Caco-2 (cell line): ENCODE measurements at regions of chr17 and their contacts with region 1.

Region 1: GRCh38 chr17:49556223-49556971 is 19.3 kb upstream of the NXPH3 start:
- DNase-seq: peak; percentile 92 to 98
- H3K4me3 ChIP-seq: peak overlapping the region; percentile 8; the same call in 1 of the 2 replicates
- H3K4me3 Mint-ChIP-seq: peak overlapping the region; percentile 27
- H3K27ac Mint-ChIP-seq: no peak overlapping the region
- H3K4me1 ChIP-seq: peaks cover 3% of the 10 kb centered on the region; the same call in 1 of the 2 replicates
- H3K4me1 Mint-ChIP-seq: peaks cover 12% of the 10 kb centered on the region
- H3K27me3 ChIP-seq: no peaks in the 10 kb centered on the region
- H3K27me3 Mint-ChIP-seq: peaks cover 6% of the 10 kb centered on the region
- CTCF ChIP-seq: peak; percentile 100

Region 2: DNA sequence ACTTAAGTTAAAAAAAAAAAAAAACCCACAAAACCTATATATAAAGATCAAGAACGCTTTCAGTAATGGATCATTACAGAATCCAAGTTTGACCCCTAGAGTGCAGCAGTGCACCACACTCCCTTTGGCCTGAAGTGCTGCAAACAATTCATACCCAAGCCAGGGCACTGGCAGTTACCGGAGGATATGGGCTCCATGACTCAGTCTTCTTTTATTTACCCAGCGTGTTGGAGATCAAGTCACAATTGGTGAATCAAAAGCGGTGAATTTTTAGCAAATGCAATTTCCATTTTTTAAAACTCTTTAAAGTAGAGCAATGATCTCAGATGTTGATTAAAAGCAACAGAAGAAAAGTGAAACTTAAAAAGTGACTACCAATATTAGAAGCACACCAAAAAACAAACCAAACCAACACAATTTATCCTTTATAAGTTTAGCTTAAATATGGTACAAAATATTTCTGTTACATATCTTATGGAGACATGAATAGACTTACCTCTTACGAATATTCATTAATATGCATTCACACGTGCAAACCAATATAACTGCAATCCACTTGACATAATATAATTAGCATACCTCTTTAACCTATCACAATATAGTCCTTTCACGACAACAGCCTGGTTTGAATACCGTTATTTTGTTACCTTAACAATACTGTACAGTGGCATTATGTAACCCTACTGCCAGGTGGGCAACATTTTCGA is 240.7 kb before region 1 on chr17:
- CTCF ChIA-PET with region 1: interaction called, 5 read pairs
- POLR2A ChIA-PET with region 1: no interaction called
- intact Hi-C with region 1: loop called (anchors 1 kb)
- DNase-seq: peak; percentile 82 to 87
- H3K4me3 ChIP-seq: no peak overlapping the region
- H3K4me3 Mint-ChIP-seq: no peak overlapping the region
- H3K27ac Mint-ChIP-seq: no peak overlapping the region
- H3K4me1 ChIP-seq: no peaks in the 10 kb centered on the region; the same call in 1 of the 2 replicates
- H3K4me1 Mint-ChIP-seq: no peaks in the 10 kb centered on the region
- H3K27me3 ChIP-seq: no peaks in the 10 kb centered on the region
- H3K27me3 Mint-ChIP-seq: no peaks in the 10 kb centered on the region
- CTCF ChIP-seq: peak; percentile 97 to 99

Region 3: DNA sequence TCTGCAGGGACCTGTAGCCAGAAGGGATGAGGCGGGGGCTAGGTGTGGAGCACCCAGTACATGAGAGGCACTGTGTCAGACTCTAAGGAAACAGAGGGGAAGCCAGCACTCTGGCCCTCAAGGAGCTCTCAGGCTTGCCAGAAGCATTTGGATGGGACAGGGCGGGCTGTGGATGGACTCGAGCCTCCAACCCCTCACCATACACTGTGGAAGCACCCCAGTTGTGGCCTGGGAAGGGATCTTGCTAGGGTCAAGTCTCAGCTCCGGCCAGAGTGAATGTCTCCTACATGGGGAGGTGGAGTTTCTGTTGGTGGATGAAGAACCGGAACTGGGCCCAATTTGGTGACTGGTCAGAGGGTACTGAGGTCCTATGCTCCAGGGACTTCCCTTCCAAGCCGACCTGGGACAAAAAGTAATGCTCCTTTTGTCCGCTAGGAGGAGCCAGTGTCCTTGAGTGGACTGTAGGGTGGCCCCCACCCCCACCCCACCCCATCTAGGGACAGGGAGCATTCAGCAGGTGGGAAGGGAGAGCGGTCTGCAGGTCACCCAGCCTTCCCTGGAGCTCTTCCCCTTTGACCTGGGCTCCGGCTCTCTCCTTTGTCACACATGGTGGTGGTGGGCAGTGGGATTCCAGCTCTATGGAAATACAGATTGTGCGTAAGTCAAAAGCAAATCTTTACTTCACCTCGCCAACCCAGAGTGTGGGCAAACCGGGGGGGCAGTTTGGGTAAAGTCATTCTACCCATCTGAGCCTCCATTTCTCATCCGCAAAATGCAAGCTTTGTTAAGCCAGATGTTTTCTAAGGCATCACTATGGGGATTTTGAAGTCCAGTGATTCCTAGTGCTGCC is 121.4 kb before region 1 on chr17:
- CTCF ChIA-PET with region 1: interaction called, 35 read pairs
- POLR2A ChIA-PET with region 1: interaction called, 3 read pairs
- intact Hi-C with region 1: loop called (anchors 1 kb)
- DNase-seq: peak; percentile 85 to 88
- H3K4me3 ChIP-seq: no peak overlapping the region
- H3K4me3 Mint-ChIP-seq: no peak overlapping the region
- H3K27ac Mint-ChIP-seq: no peak overlapping the region
- H3K4me1 ChIP-seq: no peaks in the 10 kb centered on the region
- H3K4me1 Mint-ChIP-seq: no peaks in the 10 kb centered on the region
- H3K27me3 ChIP-seq: peaks cover 5% of the 10 kb centered on the region
- H3K27me3 Mint-ChIP-seq: peaks cover 31% of the 10 kb centered on the region
- CTCF ChIP-seq: peak; percentile 97 to 99

Region 4: GRCh38 chr17:49508061-49508865 is 48.1 kb before region 1 on chr17:
- CTCF ChIA-PET with region 1: interaction called, 13 read pairs
- POLR2A ChIA-PET with region 1: no interaction called
- intact Hi-C with region 1: no loop called
- DNase-seq: peak; percentile 88 to 92
- H3K4me3 ChIP-seq: no peak overlapping the region
- H3K4me3 Mint-ChIP-seq: peak overlapping the region; percentile 40
- H3K27ac Mint-ChIP-seq: peak overlapping the region; percentile 53
- H3K4me1 ChIP-seq: peaks cover 21% of the 10 kb centered on the region
- H3K4me1 Mint-ChIP-seq: peaks cover 22% of the 10 kb centered on the region
- H3K27me3 ChIP-seq: no peaks in the 10 kb centered on the region
- H3K27me3 Mint-ChIP-seq: peaks cover 5% of the 10 kb centered on the region
- CTCF ChIP-seq: no peak

Region 5: GRCh38 chr17:49582789-49583188 is 26.4 kb after region 1 on chr17:
- CTCF ChIA-PET with region 1: interaction called, 4 read pairs
- POLR2A ChIA-PET with region 1: interaction called, 13 read pairs
- intact Hi-C with region 1: no loop called
- DNase-seq: peak in 1 of 2 experiments; percentile 39
- H3K4me3 ChIP-seq: no peak overlapping the region
- H3K4me3 Mint-ChIP-seq: no peak overlapping the region
- H3K27ac Mint-ChIP-seq: no peak overlapping the region
- H3K4me1 ChIP-seq: no peaks in the 10 kb centered on the region
- H3K4me1 Mint-ChIP-seq: no peaks in the 10 kb centered on the region
- H3K27me3 ChIP-seq: no peaks in the 10 kb centered on the region
- H3K27me3 Mint-ChIP-seq: peaks cover 4% of the 10 kb centered on the region
- CTCF ChIP-seq: no peak

Region 6: GRCh38 chr17:49667854-49668253 is 111.5 kb after region 1 on chr17:
- CTCF ChIA-PET with region 1: no interaction called
- POLR2A ChIA-PET with region 1: no interaction called
- intact Hi-C with region 1: no loop called
- DNase-seq: no peak
- H3K4me3 ChIP-seq: no peak overlapping the region
- H3K4me3 Mint-ChIP-seq: no peak overlapping the region
- H3K27ac Mint-ChIP-seq: no peak overlapping the region
- H3K4me1 ChIP-seq: no peaks in the 10 kb centered on the region
- H3K4me1 Mint-ChIP-seq: no peaks in the 10 kb centered on the region
- H3K27me3 ChIP-seq: no peaks in the 10 kb centered on the region
- H3K27me3 Mint-ChIP-seq: no peaks in the 10 kb centered on the region
- CTCF ChIP-seq: no peak

Region 7: GRCh38 chr17:49707608-49708514 is 151.5 kb after region 1 on chr17 and contains the start of gene SLC35B1:
- CTCF ChIA-PET with region 1: interaction called, 26 read pairs
- POLR2A ChIA-PET with region 1: interaction called, 3 read pairs
- intact Hi-C with region 1: no loop called
- DNase-seq: peak; percentile 100
- H3K4me3 ChIP-seq: peak within 1 kb of the TSS; percentile 69
- H3K4me3 Mint-ChIP-seq: peak within 1 kb of the TSS; percentile 89
- H3K27ac Mint-ChIP-seq: peak within 1 kb of the TSS; percentile 99
- H3K4me1 ChIP-seq: peaks cover 8% of the 10 kb centered on the region
- H3K4me1 Mint-ChIP-seq: peaks cover 28% of the 10 kb centered on the region
- H3K27me3 ChIP-seq: no peaks in the 10 kb centered on the region
- H3K27me3 Mint-ChIP-seq: no peaks in the 10 kb centered on the region
- CTCF ChIP-seq: peak; percentile 82 to 100
- total RNA-seq, gene SLC35B1: 228 and 232 TPM in 2 replicates

Region 8: DNA sequence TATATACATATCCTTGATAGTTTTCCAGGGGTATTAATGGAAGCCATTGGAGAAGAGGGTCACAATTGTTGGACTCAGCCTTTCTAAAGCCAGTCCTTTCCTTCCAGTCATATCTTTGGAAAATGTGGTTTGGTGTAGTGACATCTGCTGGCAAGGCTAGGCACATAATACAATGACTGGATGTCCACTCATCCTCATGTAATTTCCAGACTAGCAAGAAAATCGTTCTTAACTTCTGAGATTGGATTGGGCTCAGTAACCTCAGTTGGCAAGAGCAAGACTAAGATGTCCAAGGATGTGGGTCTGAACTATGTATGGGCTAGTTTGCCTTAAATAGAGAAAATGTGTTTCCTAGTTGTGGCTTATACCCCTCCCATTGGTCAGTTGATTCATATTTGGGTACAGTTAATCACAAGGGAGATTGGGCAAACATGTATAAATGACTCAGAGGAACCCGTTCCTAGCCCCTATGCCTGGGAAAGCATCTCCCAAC is 223.4 kb after region 1 on chr17:
- CTCF ChIA-PET with region 1: no interaction called
- POLR2A ChIA-PET with region 1: no interaction called
- intact Hi-C with region 1: no loop called
- DNase-seq: peak in 1 of 2 experiments; percentile 71
- H3K4me3 ChIP-seq: no peak overlapping the region
- H3K4me3 Mint-ChIP-seq: no peak overlapping the region
- H3K27ac Mint-ChIP-seq: no peak overlapping the region
- H3K4me1 ChIP-seq: peaks cover 4% of the 10 kb centered on the region; the same call in 1 of the 2 replicates
- H3K4me1 Mint-ChIP-seq: no peaks in the 10 kb centered on the region
- H3K27me3 ChIP-seq: no peaks in the 10 kb centered on the region
- H3K27me3 Mint-ChIP-seq: peaks cover 20% of the 10 kb centered on the region
- CTCF ChIP-seq: peak; percentile 91 to 94